WTC11 (cell line): ENCODE measurements at regions of chr5 and their contacts with region 1.

Region 1: GRCh38 chr5:176447982-176448608 is at the start of gene FAF2:
- DNase-seq: peak; percentile 97
- ATAC-seq: peak; percentile 98
- H3K4me3 Mint-ChIP-seq: peak within 1 kb of the TSS; percentile 94
- H3K27ac Mint-ChIP-seq: peak within 1 kb of the TSS; percentile 100
- H3K4me1 Mint-ChIP-seq: peaks cover 16% of the 10 kb centered on the region
- H3K27me3 Mint-ChIP-seq: no peaks in the 10 kb centered on the region; the same call in 1 of the 2 replicates
- CTCF ChIP-seq: peak; percentile 88
- total RNA-seq, gene FAF2: 31.9 to 32.9 TPM (median 32.1 TPM) in 3 replicates

Region 2: GRCh38 chr5:176405656-176406427 is 42.3 kb before region 1 on chr5:
- CTCF ChIA-PET with region 1: interaction called, 30 read pairs
- POLR2A ChIA-PET with region 1: no interaction called
- DNase-seq: peak; percentile 54
- ATAC-seq: peak; percentile 89
- H3K4me3 Mint-ChIP-seq: no peak overlapping the region
- H3K27ac Mint-ChIP-seq: peak overlapping the region; percentile 75
- H3K4me1 Mint-ChIP-seq: peaks cover 3% of the 10 kb centered on the region
- H3K27me3 Mint-ChIP-seq: no peaks in the 10 kb centered on the region
- CTCF ChIP-seq: no peak

Region 3: GRCh38 chr5:176429972-176430371 is 18.1 kb before region 1 on chr5:
- CTCF ChIA-PET with region 1: interaction called, 15 read pairs
- POLR2A ChIA-PET with region 1: no interaction called
- DNase-seq: no peak
- ATAC-seq: no peak
- H3K4me3 Mint-ChIP-seq: no peak overlapping the region
- H3K27ac Mint-ChIP-seq: no peak overlapping the region
- H3K4me1 Mint-ChIP-seq: no peaks in the 10 kb centered on the region
- H3K27me3 Mint-ChIP-seq: peaks cover 19% of the 10 kb centered on the region
- CTCF ChIP-seq: no peak

Region 4: DNA sequence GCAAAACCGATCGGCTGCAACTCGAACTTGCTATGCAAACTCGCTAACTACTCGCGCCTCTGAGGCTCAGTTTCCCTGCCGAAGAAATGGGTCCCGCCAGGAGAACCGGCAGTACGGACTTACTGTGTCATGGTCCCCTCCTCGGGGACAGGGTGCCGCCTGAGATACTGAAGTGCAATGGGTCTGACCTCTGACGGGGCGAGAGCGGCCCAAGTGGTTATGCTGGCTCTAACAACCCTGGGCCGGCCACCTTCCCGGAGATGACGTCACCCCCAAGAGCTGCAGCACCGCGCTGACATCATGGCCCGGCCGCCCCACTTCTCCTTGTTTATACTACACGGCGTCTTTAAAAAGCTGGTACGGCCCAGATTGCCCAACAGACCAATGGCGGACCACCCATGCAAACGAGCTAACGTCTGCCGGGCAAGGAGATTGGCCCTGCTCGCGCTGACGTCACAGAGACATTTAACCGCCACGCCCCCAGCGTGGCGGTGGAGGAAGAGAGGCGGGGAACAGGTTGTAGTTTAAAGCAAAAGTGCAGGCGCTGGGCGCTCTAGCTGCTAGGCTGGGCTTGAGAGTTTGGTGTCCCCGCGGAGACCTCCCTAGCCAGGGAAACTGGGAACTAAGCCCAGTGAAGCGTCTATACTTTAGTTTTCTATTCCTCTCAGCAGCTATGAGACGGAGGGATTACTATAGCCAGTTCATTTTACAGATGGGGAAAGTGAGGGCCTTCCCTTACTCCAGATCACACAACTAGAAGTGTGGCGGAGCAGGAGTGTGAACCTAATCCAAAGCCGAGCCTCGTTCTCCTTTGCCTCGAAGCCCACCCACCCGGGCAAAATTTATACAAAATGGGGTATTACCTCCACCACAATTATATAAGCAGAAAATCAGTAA is 89.8 kb after region 1 on chr5:
- CTCF ChIA-PET with region 1: interaction called, 26 read pairs
- POLR2A ChIA-PET with region 1: interaction called, 30 read pairs
- DNase-seq: peak; percentile 97
- ATAC-seq: peak; percentile 75
- H3K4me3 Mint-ChIP-seq: peak overlapping the region; percentile 94
- H3K27ac Mint-ChIP-seq: peak overlapping the region; percentile 100
- H3K4me1 Mint-ChIP-seq: peaks cover 71% of the 10 kb centered on the region
- H3K27me3 Mint-ChIP-seq: no peaks in the 10 kb centered on the region
- CTCF ChIP-seq: no peak

Region 5: DNA sequence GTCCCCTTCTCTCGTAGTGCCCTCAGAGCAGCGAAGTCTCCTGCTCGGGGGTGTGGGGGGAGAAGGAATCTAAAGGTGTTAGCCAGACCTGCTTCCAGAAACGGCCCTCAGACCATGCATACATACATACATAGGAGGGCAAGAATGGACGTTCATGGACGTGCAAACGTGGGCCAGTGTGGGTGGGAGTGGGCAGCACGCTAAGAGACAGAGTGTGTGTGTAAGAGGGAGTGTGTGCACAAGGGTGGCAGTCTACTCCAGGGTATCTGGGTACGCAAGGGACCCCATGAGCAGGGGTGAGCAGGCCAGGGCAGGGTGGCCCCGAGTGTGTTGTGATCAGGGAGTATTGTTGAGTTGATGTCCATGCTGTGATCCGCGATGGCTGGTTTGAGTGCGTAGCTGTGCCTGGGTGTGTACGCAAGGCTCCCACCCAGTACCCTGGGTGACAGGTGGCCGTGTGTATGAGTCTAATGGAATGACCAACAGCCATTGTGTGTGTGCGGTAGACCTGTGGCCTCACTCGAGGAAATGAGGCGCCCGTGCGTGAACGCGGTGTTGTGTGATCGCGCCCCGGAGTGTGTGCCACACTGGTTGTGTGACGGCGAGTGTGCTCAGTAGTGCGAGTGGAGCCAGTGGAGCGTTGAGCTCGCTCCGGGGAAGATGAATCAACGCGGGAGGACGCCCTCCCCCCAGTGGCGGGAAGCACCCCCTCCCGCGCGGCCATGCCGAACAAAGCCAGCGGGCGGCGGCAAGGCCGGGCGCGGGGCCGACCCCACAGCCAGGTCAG is 161.0 kb after region 1 on chr5:
- CTCF ChIA-PET with region 1: interaction called, 11 read pairs
- POLR2A ChIA-PET with region 1: no interaction called
- DNase-seq: no peak
- ATAC-seq: no peak
- H3K4me3 Mint-ChIP-seq: peak overlapping the region; percentile 91
- H3K27ac Mint-ChIP-seq: peak overlapping the region; percentile 82; the same call in 1 of the 2 replicates
- H3K4me1 Mint-ChIP-seq: peaks cover 26% of the 10 kb centered on the region
- H3K27me3 Mint-ChIP-seq: peaks cover 27% of the 10 kb centered on the region
- CTCF ChIP-seq: no peak